SK-N-SH (cell line): ENCODE measurements at regions of chr12 and their contacts with region 1.

Region 1: DNA sequence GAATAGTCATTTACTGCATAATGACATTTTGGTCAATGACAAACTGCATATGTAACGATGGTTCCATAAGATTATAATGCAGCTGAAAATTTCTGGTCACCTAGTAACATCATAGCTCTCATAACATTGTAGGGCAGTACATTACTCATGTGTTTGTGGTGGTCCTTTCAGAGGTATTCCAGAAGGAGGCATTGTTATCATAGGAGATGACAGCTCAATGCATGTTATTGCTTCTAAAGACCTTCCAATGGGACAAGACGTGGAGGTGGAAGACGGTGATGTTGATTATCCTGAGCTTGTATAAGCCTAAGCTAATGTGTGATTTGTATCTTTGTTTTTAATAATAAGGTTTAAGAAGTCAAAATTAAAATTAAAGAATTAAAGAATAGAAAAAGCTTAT is 43.8 kb upstream of the TSPAN11 start:
- DNase-seq: no peak
- H3K4me3 ChIP-seq: no peak overlapping the region
- H3K27ac ChIP-seq: no peak overlapping the region
- H3K4me1 ChIP-seq: no peaks in the 10 kb centered on the region
- H3K27me3 ChIP-seq: no peaks in the 10 kb centered on the region; the same call in 1 of the 2 replicates
- CTCF ChIP-seq: peak; percentile 40
- EP300 ChIP-seq: no peak
- RAD21 ChIP-seq: peak; percentile 78

Region 2: GRCh38 chr12:30926243-30927221 is 43.8 kb after region 1 on chr12 and contains the start of gene TSPAN11:
- CTCF ChIA-PET with region 1: interaction called, 10 read pairs
- POLR2A ChIA-PET with region 1: interaction called, 3 read pairs
- DNase-seq: peak; percentile 89
- H3K4me3 ChIP-seq: peak within 1 kb of the TSS; percentile 55 to 60
- H3K27ac ChIP-seq: peak within 1 kb of the TSS in 1 of 2 experiments; percentile 86; a peak in 2 of 4 replicates
- H3K4me1 ChIP-seq: peaks cover 9 to 53% of the 10 kb centered on the region in 2 experiments; a peak in 3 of 4 replicates
- H3K27me3 ChIP-seq: no peaks in the 10 kb centered on the region
- CTCF ChIP-seq: no peak
- EP300 ChIP-seq: no peak
- RAD21 ChIP-seq: no peak
- polyA plus RNA-seq, gene TSPAN11: 6.4 and 6.6 TPM in 2 replicates

Region 3: GRCh38 chr12:30945443-30946164 is 62.9 kb after region 1 on chr12:
- CTCF ChIA-PET with region 1: no interaction called
- POLR2A ChIA-PET with region 1: no interaction called
- DNase-seq: no peak
- H3K4me3 ChIP-seq: no peak overlapping the region
- H3K27ac ChIP-seq: no peak overlapping the region; a peak in 1 of 4 replicates
- H3K4me1 ChIP-seq: peaks cover 0 to 36% of the 10 kb centered on the region in 2 experiments; a peak in 1 of 4 replicates
- H3K27me3 ChIP-seq: no peaks in the 10 kb centered on the region
- CTCF ChIP-seq: no peak
- EP300 ChIP-seq: no peak
- RAD21 ChIP-seq: no peak